ENCODE measurements at regions of chr4 and their contacts with region 1.

Region 1: GRCh38 chr4:3193531-3194203 is 55.3 kb upstream of the MSANTD1 start:
- DNase-seq: no peak
- ATAC-seq: no peak

Region 2: GRCh38 chr4:3442959-3443749 is 249.5 kb after region 1 on chr4:
- intact Hi-C with region 1: loop called (anchors 10 kb)
- DNase-seq: peak; percentile 74
- ATAC-seq: peak; percentile 84

Measured in Right ventricle myocardium superior (tissue), 1 donor.